Cardiac septum (tissue), 1 donor: ENCODE measurements at regions of chr3 and their contacts with region 1.

Region 1: GRCh38 chr3:26647078-26647477 is 24.5 kb downstream of the LRRC3B start:
- DNase-seq: no peak

Region 2: DNA sequence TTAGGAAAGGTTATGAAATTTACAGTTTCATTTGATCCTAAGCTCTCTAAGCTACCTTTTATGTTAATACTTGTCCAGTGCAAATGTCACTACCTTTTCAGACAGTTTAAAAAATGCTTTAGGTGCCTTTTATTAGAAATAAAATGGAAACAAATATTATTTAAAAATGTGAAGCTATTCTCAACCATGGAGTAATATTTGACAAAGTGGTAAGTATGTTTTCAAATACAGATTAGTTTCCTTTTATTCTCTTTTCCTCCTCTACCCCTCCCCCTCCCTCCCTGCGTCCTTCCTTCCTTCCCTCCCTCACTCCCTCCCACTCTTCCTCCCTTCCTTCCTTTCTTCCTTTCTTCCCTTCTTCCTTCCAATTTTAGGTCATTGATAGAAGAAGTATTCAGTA is 18.2 kb before region 1 on chr3:
- intact Hi-C with region 1: loop called (anchors 1 kb)
- DNase-seq: no peak

Region 3: DNA sequence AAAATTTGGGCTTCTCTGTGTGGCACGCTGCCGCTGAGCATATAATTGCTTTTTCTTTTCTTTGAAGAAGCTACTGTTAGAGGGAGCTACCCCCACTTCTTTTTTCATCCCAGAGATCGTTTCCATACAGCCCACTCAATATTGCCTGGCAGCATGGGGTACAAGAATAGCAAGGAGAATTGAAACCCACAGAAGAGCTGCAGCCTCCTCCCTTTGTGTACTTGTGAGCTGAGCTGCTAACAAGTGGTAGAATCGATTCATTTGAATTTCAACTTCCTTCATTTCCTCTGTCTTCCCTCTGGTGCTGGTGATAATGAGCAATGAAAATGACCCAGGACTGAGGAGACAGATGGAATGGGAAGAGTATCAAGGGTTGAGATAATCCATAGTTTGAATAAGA is 40.4 kb after region 1 on chr3:
- intact Hi-C with region 1: no loop called
- DNase-seq: no peak